CD4-positive, alpha-beta T cell (primary cell): ENCODE measurements at regions of chr10 and their contacts with region 1.

Region 1: DNA sequence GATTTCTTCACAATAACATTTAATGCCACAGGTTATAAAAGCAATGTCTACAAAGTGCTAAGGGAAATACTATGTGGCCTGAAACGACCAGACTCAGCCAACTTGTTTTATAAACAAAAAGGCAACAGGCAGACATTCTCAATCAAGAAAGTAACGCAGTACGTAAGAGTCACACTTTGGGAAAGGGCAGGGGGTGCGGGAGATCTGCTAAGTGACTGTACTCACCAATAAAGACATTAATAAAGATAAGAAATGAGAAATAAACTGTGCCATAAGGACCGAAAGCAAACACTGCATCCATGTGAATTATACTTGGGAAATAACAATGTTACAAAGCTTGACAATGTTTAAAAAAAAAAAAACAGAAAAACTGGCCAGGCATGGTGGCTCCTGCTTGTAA is 25.5 kb downstream of the NSUN6 start:
- DNase-seq: no peak
- ATAC-seq: no peak
- H3K4me3 ChIP-seq: no peak overlapping the region
- H3K4me3 Mint-ChIP-seq: peak overlapping the region; percentile 53
- H3K27ac ChIP-seq: no peak overlapping the region
- H3K27ac Mint-ChIP-seq: peak overlapping the region; percentile 4
- H3K4me1 ChIP-seq: peaks cover 5% of the 10 kb centered on the region
- H3K4me1 Mint-ChIP-seq: peaks cover 21% of the 10 kb centered on the region
- H3K27me3 ChIP-seq: no peaks in the 10 kb centered on the region
- H3K27me3 Mint-ChIP-seq: no peaks in the 10 kb centered on the region
- CTCF ChIP-seq: no peak

Region 2: GRCh38 chr10:18532881-18533535 is 92.9 kb before region 1 on chr10:
- CTCF ChIA-PET with region 1: no interaction called
- POLR2A ChIA-PET with region 1: no interaction called
- intact Hi-C with region 1: no loop called
- DNase-seq: no peak
- ATAC-seq: no peak
- H3K4me3 ChIP-seq: no peak overlapping the region
- H3K4me3 Mint-ChIP-seq: no peak overlapping the region
- H3K27ac ChIP-seq: no peak overlapping the region
- H3K27ac Mint-ChIP-seq: no peak overlapping the region
- H3K4me1 ChIP-seq: no peaks in the 10 kb centered on the region
- H3K4me1 Mint-ChIP-seq: no peaks in the 10 kb centered on the region
- H3K27me3 ChIP-seq: no peaks in the 10 kb centered on the region
- H3K27me3 Mint-ChIP-seq: no peaks in the 10 kb centered on the region
- CTCF ChIP-seq: no peak

Region 3: DNA sequence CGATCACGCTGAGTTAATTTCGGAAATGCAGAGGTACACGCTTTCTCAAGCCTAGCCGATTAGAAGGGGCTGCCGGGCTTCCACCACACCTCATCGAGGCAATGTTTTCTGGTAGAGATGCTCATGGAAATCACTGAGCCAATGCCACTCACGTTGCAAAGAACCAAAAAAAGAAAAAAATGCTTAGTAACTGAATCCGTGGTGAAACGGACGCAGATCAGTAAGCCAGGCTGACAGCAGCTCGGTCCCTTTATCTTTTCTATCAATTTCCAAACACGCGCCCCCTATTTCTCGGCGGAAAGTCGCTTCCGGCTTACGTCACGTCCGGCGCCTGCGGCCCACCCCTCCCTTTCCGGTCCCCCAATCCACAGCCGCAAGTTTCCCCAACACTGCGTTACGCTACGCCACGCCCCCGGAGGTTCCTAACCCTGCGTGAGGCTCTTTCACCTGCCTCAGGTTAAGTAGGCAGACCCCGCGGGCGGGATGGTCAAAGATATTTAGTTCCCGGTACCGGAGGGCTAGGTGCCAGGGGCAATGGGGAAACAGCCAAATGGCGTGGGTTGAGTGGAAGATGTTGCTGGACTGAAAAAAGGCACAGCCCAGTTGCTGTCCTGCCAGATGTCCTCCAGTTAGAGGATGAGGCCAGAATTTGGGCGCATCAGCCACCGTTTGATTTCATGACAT is 25.6 kb after region 1 on chr10 and contains the start of gene NSUN6:
- CTCF ChIA-PET with region 1: no interaction called
- POLR2A ChIA-PET with region 1: interaction called, 6 read pairs
- intact Hi-C with region 1: loop called in 1 of 2 experiments (anchors 2 kb)
- DNase-seq: peak; percentile 88 to 97 (median 92)
- ATAC-seq: peak; percentile 94
- H3K4me3 ChIP-seq: peak within 1 kb of the TSS; percentile 68
- H3K4me3 Mint-ChIP-seq: peak within 1 kb of the TSS; percentile 98
- H3K27ac ChIP-seq: peak within 1 kb of the TSS; percentile 92 to 97
- H3K27ac Mint-ChIP-seq: peak within 1 kb of the TSS; percentile 97
- H3K4me1 ChIP-seq: peaks cover 15% of the 10 kb centered on the region
- H3K4me1 Mint-ChIP-seq: peaks cover 45% of the 10 kb centered on the region
- H3K27me3 ChIP-seq: no peaks in the 10 kb centered on the region
- H3K27me3 Mint-ChIP-seq: no peaks in the 10 kb centered on the region
- CTCF ChIP-seq: no peak
- total RNA-seq, gene NSUN6: 22.9 to 27.2 TPM

Region 4: DNA sequence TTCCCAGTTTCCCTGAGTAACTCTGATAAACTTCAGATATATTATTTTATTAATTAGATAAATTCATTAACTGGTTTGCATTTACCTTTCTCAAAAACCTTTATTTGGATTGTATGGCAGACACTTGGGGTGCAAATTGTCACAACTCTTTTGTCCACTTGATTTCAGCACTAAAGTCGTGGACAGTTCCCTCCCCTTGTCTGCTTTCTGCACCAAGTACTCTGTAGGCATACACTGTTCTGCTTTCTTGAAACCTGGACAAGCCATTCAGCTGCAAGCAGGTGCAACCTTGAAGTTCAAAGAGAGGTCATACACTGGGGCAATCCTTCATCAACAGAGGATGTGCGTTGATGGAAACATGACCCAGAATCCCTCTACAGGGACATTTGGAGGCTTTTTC is 196.3 kb after region 1 on chr10:
- CTCF ChIA-PET with region 1: no interaction called
- POLR2A ChIA-PET with region 1: no interaction called
- intact Hi-C with region 1: no loop called
- DNase-seq: peak in 1 of 14 experiments; percentile 1
- ATAC-seq: no peak
- H3K4me3 ChIP-seq: no peak overlapping the region
- H3K4me3 Mint-ChIP-seq: no peak overlapping the region
- H3K27ac ChIP-seq: no peak overlapping the region
- H3K27ac Mint-ChIP-seq: no peak overlapping the region
- H3K4me1 ChIP-seq: no peaks in the 10 kb centered on the region
- H3K4me1 Mint-ChIP-seq: no peaks in the 10 kb centered on the region
- H3K27me3 ChIP-seq: no peaks in the 10 kb centered on the region
- H3K27me3 Mint-ChIP-seq: no peaks in the 10 kb centered on the region
- CTCF ChIP-seq: no peak